A549 (cell line): ENCODE measurements at regions of chr7 and their contacts with region 1.

Region 1: DNA sequence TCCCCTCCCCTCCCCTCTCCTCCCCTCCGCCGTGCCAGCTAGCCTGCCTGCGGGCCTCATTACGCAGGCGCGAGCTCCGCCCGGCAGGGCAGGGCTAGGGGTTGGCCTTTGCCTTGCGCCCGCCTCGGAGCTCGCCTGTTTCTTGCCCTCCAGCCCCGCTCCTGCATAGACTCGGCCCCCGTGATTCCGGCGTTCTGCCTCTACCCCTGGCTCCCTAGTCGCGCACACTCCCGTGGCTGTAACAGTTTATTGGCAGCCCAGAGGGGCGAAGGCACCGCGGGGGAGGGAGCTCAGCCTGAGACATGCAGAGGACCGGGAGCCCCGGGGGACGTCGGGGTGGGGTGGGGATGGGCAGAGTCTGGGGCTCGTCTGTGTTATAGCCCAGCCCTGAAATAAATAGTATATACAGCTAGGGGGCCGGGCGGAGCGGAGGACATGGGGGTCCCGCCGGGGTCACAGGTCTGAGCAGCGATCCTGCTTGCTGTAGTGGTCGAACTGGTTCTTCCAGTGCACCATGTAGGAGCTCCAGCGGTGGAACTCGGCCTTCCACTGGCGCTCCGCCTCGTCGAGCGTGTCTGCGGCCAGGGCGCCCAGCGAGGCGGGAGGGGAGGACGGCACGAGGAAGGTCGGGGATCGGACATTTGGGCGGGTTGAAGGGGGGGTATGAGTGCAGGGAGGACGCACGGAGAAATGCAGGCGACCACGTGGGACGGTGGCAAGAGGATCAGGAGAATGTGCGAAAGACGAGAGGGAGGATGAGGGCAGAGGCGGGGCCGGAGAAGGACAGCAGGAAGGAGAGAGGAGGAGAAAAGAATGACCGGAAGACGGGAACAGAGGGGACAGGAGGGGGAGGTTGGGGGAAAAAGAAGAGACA is 483 bp upstream of the UFSP1 start:
- DNase-seq: peak; percentile 93 to 96
- ATAC-seq: peak; percentile 68 to 91
- H3K4me3 ChIP-seq: peak overlapping the region; percentile 92
- H3K27ac ChIP-seq: peak overlapping the region; percentile 86 to 95
- H3K4me1 ChIP-seq: peaks cover 34% of the 10 kb centered on the region
- CTCF ChIP-seq: no peak
- EP300 ChIP-seq: no peak
- POLR2A ChIP-seq: peak; percentile 74
- RAD21 ChIP-seq: no peak

Region 2: DNA sequence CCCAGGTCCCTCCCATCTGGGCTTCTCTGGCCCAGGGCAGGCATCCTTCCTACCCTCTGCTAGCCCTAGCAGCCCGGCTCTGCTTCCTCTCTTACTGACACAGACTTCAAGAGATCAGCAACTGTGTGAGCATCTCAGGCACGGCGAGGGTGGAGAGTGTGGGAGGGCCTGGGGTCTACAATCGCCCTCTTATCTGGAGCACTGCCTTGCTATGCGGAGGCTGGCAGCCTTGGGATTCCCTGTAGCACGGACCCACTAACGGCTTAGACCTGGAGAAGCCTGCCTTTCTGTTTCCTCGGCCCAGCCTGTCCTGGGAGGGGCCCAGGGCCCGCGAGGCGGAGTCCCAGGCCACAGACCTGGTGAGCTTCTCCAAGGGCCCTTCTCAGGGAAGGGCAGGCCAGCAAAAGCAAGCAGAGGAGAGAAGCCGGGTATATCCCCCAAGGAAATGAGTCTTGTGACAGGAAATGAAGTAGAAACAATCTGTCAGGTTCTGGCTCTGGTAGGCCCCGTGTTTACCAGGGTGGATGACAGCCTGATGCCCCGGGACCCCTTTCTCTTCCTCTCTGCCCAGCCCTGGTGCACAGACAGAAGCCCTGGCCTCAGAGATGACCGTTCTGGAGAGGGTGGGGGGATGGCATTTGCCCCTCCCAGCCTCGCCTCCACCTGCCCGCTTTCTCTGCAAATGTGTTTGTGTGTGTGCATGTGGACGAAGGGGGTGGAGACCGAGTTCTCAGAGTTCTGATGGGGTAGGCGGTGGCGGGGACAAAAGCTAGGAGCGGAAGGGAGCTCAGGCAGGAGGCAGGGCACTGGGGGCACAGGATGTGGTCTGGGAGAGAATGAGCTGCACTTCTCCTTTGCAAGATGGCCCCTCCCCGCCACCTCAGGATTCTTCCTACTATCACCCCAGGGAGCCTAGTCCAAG is 306.6 kb before region 1 on chr7:
- CTCF ChIA-PET with region 1: no interaction called
- POLR2A ChIA-PET with region 1: no interaction called
- DNase-seq: no peak
- ATAC-seq: no peak
- H3K4me3 ChIP-seq: no peak overlapping the region
- H3K27ac ChIP-seq: 0 out of 6 replicates have a peak overlapping the region, but pooled peaks of 1 of the 2 experiments have one; percentile 95
- H3K4me1 ChIP-seq: peaks cover 15% of the 10 kb centered on the region
- CTCF ChIP-seq: no peak
- EP300 ChIP-seq: no peak
- POLR2A ChIP-seq: no peak
- RAD21 ChIP-seq: no peak

Region 3: GRCh38 chr7:100852048-100852872 is 37.7 kb before region 1 on chr7 and contains the start of gene SLC12A9:
- CTCF ChIA-PET with region 1: interaction called, 13 read pairs
- POLR2A ChIA-PET with region 1: interaction called, 7 read pairs
- DNase-seq: peak; percentile 86 to 98
- ATAC-seq: peak; percentile 98 to 99
- H3K4me3 ChIP-seq: peak within 1 kb of the TSS; percentile 77
- H3K27ac ChIP-seq: peak within 1 kb of the TSS; percentile 76 to 85
- H3K4me1 ChIP-seq: 0 out of 3 replicates have a peak, but pooled peaks cover 4% of the 10 kb centered on the region
- CTCF ChIP-seq: peak; percentile 95
- EP300 ChIP-seq: no peak
- POLR2A ChIP-seq: peak; percentile 48; the same call in 1 of the 2 replicates
- RAD21 ChIP-seq: peak; percentile 94 to 98
- polyA plus RNA-seq, gene SLC12A9: 6.2 and 7.0 TPM in 2 replicates

Region 4: DNA sequence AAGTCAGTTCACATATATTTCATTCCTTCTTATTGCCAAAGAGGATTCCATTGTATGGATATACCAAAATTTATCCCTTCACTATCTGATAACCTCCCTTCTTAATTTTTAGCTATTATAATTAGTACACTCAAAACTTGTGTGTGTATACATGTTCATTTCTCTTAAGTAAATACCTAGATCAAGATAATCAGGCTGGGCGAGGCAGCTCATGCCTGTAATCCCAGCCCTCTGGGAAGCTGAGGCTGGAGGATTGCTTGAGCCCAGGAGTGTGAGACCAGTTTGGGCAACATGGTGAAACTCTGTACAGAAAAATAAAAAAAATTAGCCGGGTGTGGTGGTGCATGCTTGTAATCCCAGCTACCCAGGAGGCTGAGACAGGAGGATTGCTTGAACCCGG is 21.5 kb after region 1 on chr7:
- CTCF ChIA-PET with region 1: interaction called, 13 read pairs
- POLR2A ChIA-PET with region 1: no interaction called
- DNase-seq: no peak
- ATAC-seq: no peak
- H3K4me3 ChIP-seq: no peak overlapping the region
- H3K27ac ChIP-seq: no peak overlapping the region
- H3K4me1 ChIP-seq: no peaks in the 10 kb centered on the region
- CTCF ChIP-seq: no peak
- EP300 ChIP-seq: no peak
- POLR2A ChIP-seq: no peak
- RAD21 ChIP-seq: no peak

Region 5: GRCh38 chr7:101066141-101066832 is 176.3 kb after region 1 on chr7:
- CTCF ChIA-PET with region 1: interaction called, 27 read pairs
- POLR2A ChIA-PET with region 1: interaction called, 5 read pairs
- DNase-seq: no peak
- ATAC-seq: no peak
- H3K4me3 ChIP-seq: no peak overlapping the region
- H3K27ac ChIP-seq: no peak overlapping the region
- H3K4me1 ChIP-seq: no peaks in the 10 kb centered on the region
- CTCF ChIP-seq: no peak
- EP300 ChIP-seq: no peak
- POLR2A ChIP-seq: no peak
- RAD21 ChIP-seq: no peak

Region 6: GRCh38 chr7:101094416-101095375 is 204.7 kb after region 1 on chr7:
- CTCF ChIA-PET with region 1: interaction called, 10 read pairs
- POLR2A ChIA-PET with region 1: interaction called, 3 read pairs
- DNase-seq: peak; percentile 60 to 79
- ATAC-seq: peak; percentile 83 to 85
- H3K4me3 ChIP-seq: no peak overlapping the region
- H3K27ac ChIP-seq: peak overlapping the region; percentile 50 to 94
- H3K4me1 ChIP-seq: peaks cover 35% of the 10 kb centered on the region
- CTCF ChIP-seq: peak; percentile 84
- EP300 ChIP-seq: no peak
- POLR2A ChIP-seq: no peak
- RAD21 ChIP-seq: peak; percentile 82 to 86

Region 7: GRCh38 chr7:101287032-101287431 is 397.0 kb after region 1 on chr7:
- CTCF ChIA-PET with region 1: interaction called, 16 read pairs
- POLR2A ChIA-PET with region 1: no interaction called
- DNase-seq: no peak
- ATAC-seq: no peak
- H3K4me3 ChIP-seq: no peak overlapping the region
- H3K27ac ChIP-seq: no peak overlapping the region
- H3K4me1 ChIP-seq: 0 out of 3 replicates have a peak, but pooled peaks cover 2% of the 10 kb centered on the region
- CTCF ChIP-seq: no peak
- EP300 ChIP-seq: no peak
- POLR2A ChIP-seq: no peak
- RAD21 ChIP-seq: no peak